PC-9 (cell line): ENCODE measurements at regions of chr11 and their contacts with region 1.

Region 1: DNA sequence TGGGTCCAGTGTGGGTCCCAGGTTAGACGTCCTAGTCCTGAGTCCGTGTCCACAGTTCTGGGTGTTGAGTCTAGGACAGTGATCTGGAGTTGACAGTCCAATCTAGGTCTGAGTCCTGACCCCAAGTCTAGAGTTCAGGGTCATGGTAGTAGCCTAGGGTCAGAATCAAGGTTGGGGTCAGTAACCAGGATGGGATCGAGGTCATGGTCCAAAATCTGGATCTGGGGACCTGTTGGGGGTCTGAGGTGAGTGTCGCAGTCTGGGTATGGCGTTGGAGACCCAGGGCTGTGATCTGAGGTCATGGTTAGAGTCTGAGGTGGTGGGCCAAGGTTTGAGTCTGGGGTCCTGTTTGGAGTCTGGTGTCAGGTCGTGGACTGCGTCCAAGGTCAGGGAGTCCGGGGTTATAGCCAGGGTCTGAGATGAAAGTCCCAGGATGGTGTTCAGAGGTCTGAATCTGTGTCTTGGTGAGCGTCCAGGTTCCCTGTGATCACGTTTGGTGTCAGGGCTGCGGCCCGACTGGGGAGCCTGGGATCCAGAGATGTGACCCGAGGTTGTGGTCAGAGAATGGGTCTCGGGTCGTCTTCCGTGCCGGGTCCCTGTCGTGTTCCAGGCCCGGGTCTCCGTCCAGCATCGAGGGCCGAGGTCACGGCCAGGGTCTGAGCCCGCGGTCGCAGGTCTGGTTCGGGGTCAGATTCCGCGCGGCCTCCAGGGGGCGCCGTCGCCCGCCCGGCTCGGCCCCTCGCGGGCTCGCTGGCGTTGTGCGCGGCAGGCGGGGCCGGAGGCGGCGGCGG is 445 bp upstream of the GRK2 start:
- DNase-seq: peak in 1 of 2 experiments; percentile 88
- H3K4me3 ChIP-seq: peak overlapping the region; percentile 32; the same call in 1 of the 2 replicates
- H3K27ac ChIP-seq: no peak overlapping the region
- H3K4me1 ChIP-seq: peaks cover 38% of the 10 kb centered on the region
- H3K27me3 ChIP-seq: no peaks in the 10 kb centered on the region
- CTCF ChIP-seq: peak; percentile 77

Region 2: GRCh38 chr11:67082035-67082791 is 183.6 kb before region 1 on chr11:
- CTCF ChIA-PET with region 1: interaction called, 11 read pairs
- POLR2A ChIA-PET with region 1: no interaction called
- intact Hi-C with region 1: loop called (anchors 5 kb)
- DNase-seq: peak in 1 of 2 experiments; percentile 75
- H3K4me3 ChIP-seq: no peak overlapping the region
- H3K27ac ChIP-seq: no peak overlapping the region
- H3K4me1 ChIP-seq: peaks cover 44% of the 10 kb centered on the region
- H3K27me3 ChIP-seq: no peaks in the 10 kb centered on the region
- CTCF ChIP-seq: no peak

Region 3: GRCh38 chr11:67248653-67249052 is 17.2 kb before region 1 on chr11:
- CTCF ChIA-PET with region 1: interaction called, 11 read pairs
- POLR2A ChIA-PET with region 1: no interaction called
- intact Hi-C with region 1: no loop called
- DNase-seq: peak; percentile 97 to 98
- H3K4me3 ChIP-seq: no peak overlapping the region; the same call in 1 of the 2 replicates
- H3K27ac ChIP-seq: peak overlapping the region; percentile 81
- H3K4me1 ChIP-seq: peaks cover 73% of the 10 kb centered on the region
- H3K27me3 ChIP-seq: no peaks in the 10 kb centered on the region
- CTCF ChIP-seq: no peak

Region 4: GRCh38 chr11:67382276-67383136 is 116.7 kb after region 1 on chr11:
- CTCF ChIA-PET with region 1: interaction called, 13 read pairs
- POLR2A ChIA-PET with region 1: interaction called, 3 read pairs
- intact Hi-C with region 1: loop called (anchors 5 kb)
- DNase-seq: peak; percentile 66 to 84
- H3K4me3 ChIP-seq: no peak overlapping the region
- H3K27ac ChIP-seq: no peak overlapping the region
- H3K4me1 ChIP-seq: peaks cover 64% of the 10 kb centered on the region
- H3K27me3 ChIP-seq: no peaks in the 10 kb centered on the region
- CTCF ChIP-seq: peak; percentile 99